Left lung (tissue), 14 donors: ENCODE measurements at regions of chr2 and their contacts with region 1.

Region 1: GRCh38 chr2:37414470-37414949 is 70.1 kb downstream of the QPCT start:
- DNase-seq: peak in 2 of 4 donors; percentile 35 to 55
- ATAC-seq: peak; percentile 93
- H3K4me3 ChIP-seq: no peak overlapping the region
- H3K27ac ChIP-seq: no peak overlapping the region
- H3K4me1 ChIP-seq: peaks cover 5 to 8% of the 10 kb centered on the region in 2 donors
- H3K27me3 ChIP-seq: no peaks in the 10 kb centered on the region
- CTCF ChIP-seq: peak; percentile 72 to 82

Region 2: DNA sequence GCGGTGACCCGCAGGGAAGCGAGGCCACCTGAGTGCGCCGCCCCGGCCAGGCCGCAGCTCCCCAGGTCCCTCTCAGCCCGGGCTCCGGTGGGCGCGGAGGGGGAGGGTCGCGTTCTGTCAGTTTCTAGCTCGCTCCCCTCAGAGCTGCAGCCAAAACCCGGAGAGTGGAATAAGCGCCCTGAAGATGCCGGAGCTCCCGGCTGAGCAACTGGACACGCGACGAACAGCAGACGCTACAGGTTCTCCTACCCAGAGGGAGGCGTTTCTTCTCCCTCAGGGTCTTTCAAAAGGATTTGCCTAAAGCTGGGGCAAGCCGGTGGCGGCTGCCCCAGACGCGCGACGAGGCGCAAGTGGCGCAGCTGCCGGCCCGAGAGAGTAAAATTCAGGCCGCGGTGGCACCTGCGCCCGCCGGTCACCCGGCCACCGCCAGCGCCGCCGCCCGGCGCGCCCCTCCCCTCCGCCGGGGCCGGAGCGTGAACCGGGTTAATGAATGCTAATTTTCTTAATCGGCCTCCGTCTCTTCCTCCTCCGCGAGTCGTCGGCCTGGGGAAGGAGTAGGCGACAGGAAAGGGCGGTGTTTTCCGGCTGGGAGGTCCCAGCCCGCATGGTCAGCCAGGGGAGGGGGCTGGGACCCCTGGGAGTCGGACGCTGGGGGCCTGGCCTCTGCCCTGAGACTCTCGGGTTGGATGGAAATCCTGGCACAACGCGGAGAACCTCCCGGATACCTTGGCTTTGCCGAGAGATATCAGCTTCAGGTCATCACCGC is 257.8 kb after region 1 on chr2:
- intact Hi-C with region 1: no loop called
- DNase-seq: peak; percentile 80 to 94 (median 84)
- ATAC-seq: peak; percentile 66
- H3K4me3 ChIP-seq: peak overlapping the region; percentile 76 to 86
- H3K27ac ChIP-seq: peak overlapping the region; percentile 90 to 97
- H3K4me1 ChIP-seq: peaks cover 19 to 67% of the 10 kb centered on the region in 2 donors
- H3K27me3 ChIP-seq: no peaks in the 10 kb centered on the region
- CTCF ChIP-seq: no peak

Region 3: GRCh38 chr2:37832590-37833197 is 418.2 kb after region 1 on chr2:
- intact Hi-C with region 1: loop called in 1 of 2 experiments (anchors 5 kb)
- DNase-seq: peak; percentile 63 to 86 (median 86)
- ATAC-seq: peak; percentile 99
- H3K4me3 ChIP-seq: no peak overlapping the region
- H3K27ac ChIP-seq: no peak overlapping the region
- H3K4me1 ChIP-seq: peaks cover 3 to 38% of the 10 kb centered on the region in 2 donors
- H3K27me3 ChIP-seq: no peaks in the 10 kb centered on the region
- CTCF ChIP-seq: peak; percentile 58 to 84

Region 4: GRCh38 chr2:37877457-37878315 is 463.2 kb after region 1 on chr2:
- intact Hi-C with region 1: loop called in 1 of 2 experiments (anchors 10 kb)
- DNase-seq: peak in 2 of 4 donors; percentile 52 to 78
- ATAC-seq: peak; percentile 93
- H3K4me3 ChIP-seq: no peak overlapping the region
- H3K27ac ChIP-seq: no peak overlapping the region
- H3K4me1 ChIP-seq: no peaks in the 10 kb centered on the region
- H3K27me3 ChIP-seq: no peaks in the 10 kb centered on the region
- CTCF ChIP-seq: peak; percentile 55 to 73